Activated T-helper 1 cell treated with anti-CD3 and anti-CD28 coated beads, Interleukin-12 subunit alpha, Interleukin-12 subunit beta, Interleukin-2, Interleukin-4 antibody, amounts not matched to agents 30 ng/mL and 10 ng/mL and 1 ng/mL, durations not matched to agents 14 hours and 24 hours and 36 hours (primary cell): ENCODE measurements at regions of chr1 and their contacts with region 1.

Region 1: GRCh38 chr1:9196129-9197040 is 38.2 kb upstream of the H6PD start:
- DNase-seq: peak; percentile 47
- H3K4me3 Mint-ChIP-seq: no peak overlapping the region
- H3K27ac Mint-ChIP-seq: no peak overlapping the region
- H3K4me1 Mint-ChIP-seq: peaks cover 24% of the 10 kb centered on the region
- H3K27me3 Mint-ChIP-seq: peaks cover 54% of the 10 kb centered on the region

Region 2: GRCh38 chr1:9133870-9134585 is 62.4 kb before region 1 on chr1:
- intact Hi-C with region 1: no loop called
- DNase-seq: no peak
- H3K4me3 Mint-ChIP-seq: no peak overlapping the region
- H3K27ac Mint-ChIP-seq: no peak overlapping the region
- H3K4me1 Mint-ChIP-seq: peaks cover 21% of the 10 kb centered on the region
- H3K27me3 Mint-ChIP-seq: peaks cover 18% of the 10 kb centered on the region

Region 3: DNA sequence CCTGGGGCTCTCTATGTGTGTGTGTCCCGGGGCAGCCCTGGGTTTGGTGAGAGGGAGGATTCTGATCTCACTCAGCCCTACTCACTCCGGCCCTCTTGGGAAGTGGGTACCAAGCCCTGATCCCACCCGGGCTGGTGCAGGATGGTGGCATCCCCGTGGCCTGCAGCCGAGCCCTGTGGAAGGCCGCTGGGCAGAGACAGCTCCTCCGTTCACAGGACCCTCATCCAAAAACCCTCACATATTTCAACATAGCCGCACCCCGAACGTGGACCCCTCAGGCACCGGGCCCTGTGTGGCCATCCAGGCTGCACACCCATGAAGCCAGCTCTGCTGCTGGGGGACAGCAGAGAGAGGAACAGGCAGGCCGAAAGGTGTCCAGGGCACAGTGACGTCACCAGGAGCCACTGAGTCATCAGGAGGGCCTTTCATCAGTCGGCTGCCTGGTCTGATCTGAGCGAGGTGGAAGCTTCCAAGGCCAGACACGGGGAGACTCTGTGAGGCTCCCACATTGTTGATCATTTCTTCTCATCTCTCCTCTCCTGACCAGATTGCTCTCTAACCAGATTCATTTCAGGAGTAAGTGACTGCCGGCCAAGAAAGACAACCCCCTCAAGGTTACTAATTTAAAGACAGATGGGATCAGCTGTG is 51.2 kb before region 1 on chr1:
- intact Hi-C with region 1: loop called (anchors 1 kb)
- DNase-seq: no peak
- H3K4me3 Mint-ChIP-seq: no peak overlapping the region
- H3K27ac Mint-ChIP-seq: no peak overlapping the region
- H3K4me1 Mint-ChIP-seq: peaks cover 5% of the 10 kb centered on the region
- H3K27me3 Mint-ChIP-seq: peaks cover 3% of the 10 kb centered on the region

Region 4: DNA sequence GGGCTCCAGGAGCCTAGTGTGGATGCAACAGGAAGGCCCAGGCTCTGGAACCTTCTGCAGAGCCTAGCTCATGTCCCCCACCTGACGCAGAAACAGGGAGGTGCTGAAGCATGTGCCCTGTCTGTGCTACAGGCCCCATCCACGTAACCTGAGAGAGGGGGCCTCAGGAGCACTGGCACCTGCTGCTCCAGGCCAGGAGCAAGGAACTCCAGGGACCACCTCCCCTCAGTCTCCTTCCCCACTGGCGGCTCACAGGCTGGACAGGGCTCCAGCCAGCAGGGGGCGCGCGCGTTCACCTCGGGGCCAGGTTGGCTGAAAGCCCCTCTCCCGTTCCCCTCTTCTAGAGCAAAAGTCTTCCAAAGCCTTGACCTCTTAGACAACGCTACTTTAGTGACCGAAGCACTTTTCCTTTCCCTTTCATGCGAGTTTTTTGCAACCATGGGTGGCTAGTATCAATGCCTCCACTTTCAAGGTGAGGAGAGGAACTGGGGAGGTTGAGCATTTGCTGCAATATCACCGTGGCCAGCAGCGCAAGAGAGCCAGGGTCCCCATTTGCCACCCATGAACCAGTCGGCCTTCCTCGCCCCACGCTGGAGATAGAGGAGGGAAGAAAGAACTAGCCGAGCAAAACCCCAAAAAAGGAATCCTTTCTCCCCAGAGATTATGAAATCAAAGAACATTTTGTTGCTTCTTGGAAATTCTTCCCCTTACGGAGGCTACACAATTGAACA is 15.0 kb before region 1 on chr1:
- intact Hi-C with region 1: loop called (anchors 1 kb)
- DNase-seq: peak; percentile 66
- H3K4me3 Mint-ChIP-seq: peak overlapping the region; percentile 90
- H3K27ac Mint-ChIP-seq: peak overlapping the region; percentile 85
- H3K4me1 Mint-ChIP-seq: peaks cover 22% of the 10 kb centered on the region
- H3K27me3 Mint-ChIP-seq: peaks cover 11% of the 10 kb centered on the region